Naive thymus-derived CD4-positive, alpha-beta T cell (primary cell): ENCODE measurements at regions of chr16 and their contacts with region 1.

Region 1: GRCh38 chr16:30813821-30814189 is 26.8 kb upstream of the ZNF629 start:
- DNase-seq: no peak
- ATAC-seq: no peak
- H3K4me3 ChIP-seq: peak overlapping the region; percentile 70
- H3K4me3 Mint-ChIP-seq: peak overlapping the region; percentile 84 to 92 (median 86)
- H3K27ac ChIP-seq: peak overlapping the region; percentile 73
- H3K27ac Mint-ChIP-seq: peak overlapping the region; percentile 61 to 98 (median 88)
- H3K4me1 ChIP-seq: peaks cover 7% of the 10 kb centered on the region in 2 donors
- H3K4me1 Mint-ChIP-seq: peaks cover 5 to 15% (median 13%) of the 10 kb centered on the region in 7 donors
- H3K27me3 ChIP-seq: no peaks in the 10 kb centered on the region
- H3K27me3 Mint-ChIP-seq: peaks cover 0 to 3% (median 0%) of the 10 kb centered on the region in 5 donors

Region 2: DNA sequence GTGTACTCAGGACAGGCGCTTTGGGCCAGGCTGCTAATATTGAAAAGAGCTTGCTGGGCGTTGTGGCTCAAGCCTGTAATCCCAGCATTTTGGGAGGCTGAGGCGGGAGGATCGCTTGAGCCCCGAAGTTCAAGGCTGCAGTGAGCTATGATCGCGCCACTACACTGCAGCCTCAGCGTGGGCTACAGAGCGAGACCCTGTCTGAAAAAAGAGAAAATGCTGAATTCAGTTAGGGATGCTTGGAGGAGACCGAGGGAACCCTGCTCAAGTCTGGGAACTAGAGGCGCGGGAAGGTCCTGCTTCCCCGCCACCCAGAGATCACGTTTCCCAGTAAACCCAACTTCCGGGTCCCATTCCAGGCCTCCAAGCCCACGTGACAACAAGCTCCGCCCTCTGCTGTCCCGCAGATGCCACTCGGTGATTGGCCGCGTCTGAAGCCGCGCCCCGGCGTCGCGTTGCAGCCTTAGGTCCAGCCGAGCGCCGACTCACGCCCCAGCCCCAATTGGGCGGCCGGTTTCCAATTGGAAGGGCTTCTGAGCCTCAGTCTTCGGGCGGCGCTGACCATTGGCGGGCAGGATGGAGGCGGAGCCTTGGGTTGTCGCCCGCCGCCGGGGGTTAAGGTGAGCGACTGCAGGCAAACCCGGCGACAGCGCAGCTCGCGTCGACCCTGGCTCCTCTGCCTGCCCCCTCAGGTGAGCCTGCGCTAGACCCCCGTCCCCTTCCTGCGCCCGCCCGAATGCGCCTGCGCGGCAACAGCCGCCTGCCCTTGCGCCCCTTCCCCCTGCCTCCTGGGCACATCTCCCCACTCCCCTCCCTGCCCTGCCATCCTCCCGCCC is 65.8 kb before region 1 on chr16 and contains the start of gene PHKG2:
- CTCF ChIA-PET with region 1: interaction called, 4 read pairs
- POLR2A ChIA-PET with region 1: interaction called, 9 read pairs
- intact Hi-C with region 1: loop called in 1 of 2 experiments (anchors 1 kb)
- DNase-seq: peak; percentile 82 to 95 (median 92)
- ATAC-seq: peak; percentile 99
- H3K4me3 ChIP-seq: peak within 1 kb of the TSS; percentile 51
- H3K4me3 Mint-ChIP-seq: peak within 1 kb of the TSS; percentile 78 to 98 (median 90)
- H3K27ac ChIP-seq: peak within 1 kb of the TSS; percentile 75
- H3K27ac Mint-ChIP-seq: peak within 1 kb of the TSS; percentile 82 to 95 (median 90)
- H3K4me1 ChIP-seq: peaks cover 4 to 6% of the 10 kb centered on the region in 2 donors
- H3K4me1 Mint-ChIP-seq: peaks cover 18 to 29% (median 27%) of the 10 kb centered on the region in 7 donors
- H3K27me3 ChIP-seq: no peaks in the 10 kb centered on the region
- H3K27me3 Mint-ChIP-seq: no peaks in the 10 kb centered on the region
- total RNA-seq, gene PHKG2: 33.2 to 57.8 (median 46.7) TPM

Region 3: DNA sequence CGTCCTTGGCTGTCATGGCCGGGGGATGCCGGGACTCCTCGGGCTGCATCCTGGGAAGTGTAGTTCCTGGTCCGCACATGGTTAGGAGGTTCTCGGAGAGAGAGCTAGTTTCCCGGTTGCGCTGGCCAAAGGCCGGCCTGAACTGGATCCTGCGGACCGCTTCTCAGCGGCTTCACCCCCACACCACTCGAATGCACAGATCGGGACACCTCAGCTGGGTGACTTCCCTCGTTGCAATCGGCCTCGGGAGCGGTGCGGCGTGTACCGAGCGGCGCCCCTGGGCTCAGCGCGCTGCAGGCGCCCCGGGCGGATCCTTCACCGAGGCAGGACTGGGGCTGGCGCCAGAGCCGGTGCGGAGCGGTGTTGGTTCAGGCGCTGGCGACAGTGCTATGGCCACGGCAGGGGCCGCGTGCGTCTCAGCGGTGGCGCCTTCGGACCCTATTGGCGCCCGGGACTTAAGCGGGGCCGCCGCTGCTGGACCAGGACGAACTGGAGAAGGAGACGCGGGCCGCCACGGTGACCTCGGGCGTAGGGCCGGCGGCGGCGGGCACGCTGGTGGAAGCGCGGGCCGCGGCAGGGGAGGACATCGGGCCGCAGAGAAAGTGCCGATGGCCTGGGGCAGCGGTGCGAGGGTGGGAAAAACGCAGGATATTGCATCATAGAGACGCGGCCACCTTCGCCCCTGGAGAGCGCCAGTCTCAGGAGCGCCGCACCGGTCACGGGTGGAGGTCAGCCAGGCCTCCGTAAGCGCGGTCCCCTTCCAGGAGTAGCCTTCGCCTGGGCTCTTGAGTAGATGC is 38.2 kb before region 1 on chr16:
- CTCF ChIA-PET with region 1: no interaction called
- POLR2A ChIA-PET with region 1: interaction called, 5 read pairs
- intact Hi-C with region 1: loop called (anchors 1 kb)
- DNase-seq: peak; percentile 32 to 64 (median 51)
- ATAC-seq: peak; percentile 84
- H3K4me3 ChIP-seq: peak overlapping the region; percentile 57
- H3K4me3 Mint-ChIP-seq: peak overlapping the region; percentile 85 to 97 (median 90)
- H3K27ac ChIP-seq: peak overlapping the region; percentile 62
- H3K27ac Mint-ChIP-seq: peak overlapping the region in 7 of 9 donors; percentile 34 to 95 (median 73)
- H3K4me1 ChIP-seq: peaks cover 0 to 4% of the 10 kb centered on the region in 2 donors
- H3K4me1 Mint-ChIP-seq: peaks cover 15 to 40% (median 25%) of the 10 kb centered on the region in 7 donors
- H3K27me3 ChIP-seq: no peaks in the 10 kb centered on the region
- H3K27me3 Mint-ChIP-seq: peaks cover 0 to 5% (median 0%) of the 10 kb centered on the region in 5 donors

Region 4: DNA sequence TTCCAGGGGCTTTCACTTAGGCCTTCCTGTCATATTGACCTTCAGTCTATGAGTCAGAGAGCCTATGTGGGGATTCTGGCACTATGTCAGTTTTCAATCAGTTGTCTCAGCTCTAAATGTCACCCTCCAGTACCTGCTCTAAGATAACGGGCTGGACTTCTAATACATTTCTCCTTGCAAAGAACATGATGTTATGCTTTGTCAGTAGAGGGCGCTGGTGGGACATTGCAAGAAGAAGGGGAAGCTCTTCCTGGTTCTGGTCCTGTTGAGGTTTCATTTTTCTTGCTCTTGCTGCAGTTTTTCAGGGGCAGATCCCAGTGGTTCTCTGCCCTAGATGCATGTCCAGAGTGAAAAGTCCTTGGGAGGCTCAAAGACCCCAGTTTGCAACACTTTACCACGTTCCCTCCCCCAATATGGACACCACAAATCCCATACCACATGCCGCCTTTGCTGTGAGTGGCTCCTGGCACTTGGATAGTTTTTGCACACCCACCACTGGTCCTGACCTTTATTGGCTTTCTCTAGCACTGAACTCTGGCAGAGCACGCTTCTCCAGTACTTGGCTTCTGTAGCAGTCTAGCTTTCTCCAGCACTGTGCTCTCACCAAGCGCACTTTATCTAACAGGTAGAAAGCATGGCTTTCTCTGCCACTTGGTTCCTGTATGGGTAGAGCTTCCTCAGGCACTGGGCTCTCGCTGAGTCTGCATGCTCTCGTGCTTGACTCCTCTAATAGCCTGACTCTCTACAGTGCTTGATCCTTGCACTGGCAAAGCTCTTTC is 31.1 kb after region 1 on chr16:
- CTCF ChIA-PET with region 1: interaction called, 24 read pairs
- POLR2A ChIA-PET with region 1: interaction called, 3 read pairs
- intact Hi-C with region 1: no loop called
- DNase-seq: peak; percentile 50 to 89 (median 83)
- ATAC-seq: peak; percentile 97
- H3K4me3 ChIP-seq: no peak overlapping the region
- H3K4me3 Mint-ChIP-seq: peak overlapping the region in 9 of 10 donors; percentile 22 to 67 (median 64)
- H3K27ac ChIP-seq: peak overlapping the region; percentile 1
- H3K27ac Mint-ChIP-seq: peak overlapping the region; percentile 2 to 82 (median 73)
- H3K4me1 ChIP-seq: peaks cover 0 to 5% of the 10 kb centered on the region in 2 donors
- H3K4me1 Mint-ChIP-seq: peaks cover 6 to 14% (median 8%) of the 10 kb centered on the region in 7 donors
- H3K27me3 ChIP-seq: no peaks in the 10 kb centered on the region
- H3K27me3 Mint-ChIP-seq: no peaks in the 10 kb centered on the region

Region 5: DNA sequence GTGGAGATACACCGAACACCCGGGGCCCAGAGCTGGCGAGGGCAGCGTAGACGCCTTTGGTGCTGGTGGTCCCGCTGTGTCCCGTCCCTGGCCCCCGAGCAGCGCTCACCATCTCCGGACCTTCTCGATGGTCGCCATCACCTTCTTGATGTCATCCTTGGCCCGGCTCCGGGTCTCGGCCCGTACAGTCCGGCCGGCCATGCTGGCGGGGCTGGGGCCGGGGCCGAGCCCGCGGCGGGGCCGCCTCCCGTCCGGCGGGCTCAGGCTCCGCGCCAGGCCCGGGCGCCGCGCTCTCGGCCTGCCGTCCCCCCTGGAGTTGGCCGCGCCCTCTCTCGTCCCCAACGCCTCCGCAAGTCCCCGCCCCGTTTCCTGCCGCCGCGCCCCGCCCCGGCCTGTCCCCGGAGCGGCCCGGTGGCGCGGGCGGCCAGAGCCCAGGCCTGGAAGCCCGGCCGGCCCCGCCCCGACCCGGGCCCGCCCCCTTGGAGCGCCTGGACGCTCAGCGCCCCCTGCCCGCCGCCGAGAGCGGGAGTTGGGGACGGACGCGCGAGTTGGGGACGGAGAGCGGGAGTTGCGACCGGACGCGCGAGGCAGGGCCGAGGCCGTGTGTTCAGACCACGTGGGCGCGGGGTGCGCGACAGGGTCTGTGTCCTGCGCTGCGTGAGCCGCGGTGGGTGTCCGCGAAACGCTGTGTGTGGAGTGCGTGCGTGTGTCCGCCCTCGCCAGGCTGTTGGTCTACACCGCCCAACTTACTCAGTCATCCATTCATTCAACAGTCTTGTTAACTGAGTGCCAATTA is 80.1 kb after region 1 on chr16 and contains the start of gene BCL7C:
- CTCF ChIA-PET with region 1: no interaction called
- POLR2A ChIA-PET with region 1: interaction called, 7 read pairs
- intact Hi-C with region 1: loop called in 1 of 2 experiments (anchors 1 kb)
- DNase-seq: peak; percentile 48 to 96 (median 61)
- ATAC-seq: peak; percentile 85
- H3K4me3 ChIP-seq: peak within 1 kb of the TSS; percentile 82
- H3K4me3 Mint-ChIP-seq: peak within 1 kb of the TSS; percentile 84 to 96 (median 90)
- H3K27ac ChIP-seq: peak within 1 kb of the TSS; percentile 82
- H3K27ac Mint-ChIP-seq: peak within 1 kb of the TSS; percentile 80 to 94 (median 91)
- H3K4me1 ChIP-seq: peaks cover 25 to 34% of the 10 kb centered on the region in 2 donors
- H3K4me1 Mint-ChIP-seq: peaks cover 26 to 60% (median 48%) of the 10 kb centered on the region in 7 donors
- H3K27me3 ChIP-seq: no peaks in the 10 kb centered on the region
- H3K27me3 Mint-ChIP-seq: no peaks in the 10 kb centered on the region
- total RNA-seq, gene BCL7C: 17.2 to 23.7 (median 22.7) TPM

Region 6: DNA sequence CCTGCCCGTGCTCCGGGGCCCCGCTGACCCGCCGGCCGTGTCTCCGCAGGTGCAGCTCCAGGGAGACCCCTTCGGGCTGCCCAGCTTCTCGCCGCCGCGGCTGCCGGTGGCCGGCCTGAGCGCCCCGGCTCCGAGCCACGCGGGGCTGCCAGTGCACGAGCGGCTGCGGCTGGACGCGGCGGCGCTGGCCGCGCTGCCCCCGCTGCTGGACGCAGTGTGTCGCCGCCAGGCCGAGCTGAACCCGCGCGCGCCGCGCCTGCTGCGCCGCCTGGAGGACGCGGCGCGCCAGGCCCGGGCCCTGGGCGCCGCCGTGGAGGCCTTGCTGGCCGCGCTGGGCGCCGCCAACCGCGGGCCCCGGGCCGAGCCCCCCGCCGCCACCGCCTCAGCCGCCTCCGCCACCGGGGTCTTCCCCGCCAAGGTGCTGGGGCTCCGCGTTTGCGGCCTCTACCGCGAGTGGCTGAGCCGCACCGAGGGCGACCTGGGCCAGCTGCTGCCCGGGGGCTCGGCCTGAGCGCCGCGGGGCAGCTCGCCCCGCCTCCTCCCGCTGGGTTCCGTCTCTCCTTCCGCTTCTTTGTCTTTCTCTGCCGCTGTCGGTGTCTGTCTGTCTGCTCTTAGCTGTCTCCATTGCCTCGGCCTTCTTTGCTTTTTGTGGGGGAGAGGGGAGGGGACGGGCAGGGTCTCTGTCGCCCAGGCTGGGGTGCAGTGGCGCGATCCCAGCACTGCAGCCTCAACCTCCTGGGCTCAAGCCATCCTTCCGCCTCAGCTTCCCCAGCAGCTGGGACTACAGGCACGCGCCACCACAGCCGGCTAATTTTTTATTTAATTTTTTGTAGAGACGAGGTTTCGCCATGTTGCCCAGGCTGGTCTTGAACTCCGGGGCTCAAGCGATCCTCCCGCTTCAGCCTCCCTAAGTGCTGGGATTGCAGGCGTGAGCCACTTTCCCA is 88.5 kb after region 1 on chr16:
- CTCF ChIA-PET with region 1: no interaction called
- POLR2A ChIA-PET with region 1: interaction called, 5 read pairs
- intact Hi-C with region 1: loop called in 1 of 2 experiments (anchors 1 kb)
- DNase-seq: peak in 8 of 9 donors; percentile 38 to 76 (median 61)
- ATAC-seq: peak; percentile 92
- H3K4me3 ChIP-seq: peak overlapping the region; percentile 65
- H3K4me3 Mint-ChIP-seq: peak overlapping the region; percentile 91 to 99 (median 96)
- H3K27ac ChIP-seq: peak overlapping the region; percentile 80
- H3K27ac Mint-ChIP-seq: peak overlapping the region; percentile 90 to 99 (median 98)
- H3K4me1 ChIP-seq: peaks cover 26 to 35% of the 10 kb centered on the region in 2 donors
- H3K4me1 Mint-ChIP-seq: peaks cover 18 to 43% (median 32%) of the 10 kb centered on the region in 7 donors
- H3K27me3 ChIP-seq: no peaks in the 10 kb centered on the region
- H3K27me3 Mint-ChIP-seq: no peaks in the 10 kb centered on the region

Region 7: DNA sequence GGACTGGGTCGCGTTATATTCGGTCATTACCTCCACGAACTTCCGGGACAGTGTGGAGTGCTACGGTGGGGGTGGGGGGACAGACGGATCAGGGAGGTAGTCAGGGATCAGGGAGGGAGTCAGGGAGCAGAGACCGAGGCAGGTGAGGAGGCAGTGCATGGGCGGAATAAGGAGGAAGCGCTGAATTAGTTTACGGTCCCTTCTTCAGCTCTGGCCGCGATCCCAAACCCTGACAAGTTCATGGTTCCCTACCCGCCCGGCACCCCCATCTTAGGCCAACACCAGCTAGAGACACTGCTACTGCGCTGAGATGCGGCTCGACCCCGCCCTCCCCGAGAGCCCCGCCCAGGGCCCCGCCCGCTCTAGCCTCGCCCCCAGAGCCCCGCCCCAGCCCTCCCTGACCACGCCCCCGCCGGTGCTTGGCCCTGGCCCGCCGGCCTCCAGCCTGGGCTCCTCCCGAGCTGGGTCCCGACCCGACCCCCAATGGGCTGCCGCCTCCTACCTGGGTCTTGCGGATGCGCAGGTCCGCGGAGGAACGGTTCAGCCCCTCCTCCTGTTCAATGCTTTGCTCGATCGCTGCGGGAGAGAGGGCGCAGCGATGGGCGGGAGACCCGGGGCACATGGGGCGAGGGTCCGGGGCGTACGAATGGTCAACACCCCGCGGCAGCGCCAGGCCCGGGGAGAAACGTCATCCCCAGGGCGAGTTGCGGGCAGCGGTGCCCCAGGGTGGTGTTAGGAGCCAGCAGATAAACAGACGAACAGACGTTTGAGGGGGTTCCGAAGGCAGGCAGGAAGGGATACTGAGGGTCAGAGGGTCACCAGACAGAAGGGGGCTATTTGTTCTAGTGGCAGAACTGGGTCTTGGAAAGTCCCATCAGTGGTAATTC is 183.4 kb after region 1 on chr16:
- CTCF ChIA-PET with region 1: no interaction called
- POLR2A ChIA-PET with region 1: no interaction called
- intact Hi-C with region 1: no loop called
- DNase-seq: peak; percentile 45 to 80 (median 66)
- ATAC-seq: peak; percentile 99
- H3K4me3 ChIP-seq: peak overlapping the region; percentile 78
- H3K4me3 Mint-ChIP-seq: peak overlapping the region; percentile 66 to 90 (median 82)
- H3K27ac ChIP-seq: peak overlapping the region; percentile 61
- H3K27ac Mint-ChIP-seq: peak overlapping the region in 7 of 9 donors; percentile 58 to 87 (median 74)
- H3K4me1 ChIP-seq: peaks cover 5 to 11% of the 10 kb centered on the region in 2 donors
- H3K4me1 Mint-ChIP-seq: peaks cover 0 to 9% (median 6%) of the 10 kb centered on the region in 7 donors
- H3K27me3 ChIP-seq: no peaks in the 10 kb centered on the region
- H3K27me3 Mint-ChIP-seq: peaks cover 0 to 3% (median 0%) of the 10 kb centered on the region in 5 donors